AG04449 (cell line): ENCODE measurements at regions of chr9 and their contacts with region 1.

Region 1: DNA sequence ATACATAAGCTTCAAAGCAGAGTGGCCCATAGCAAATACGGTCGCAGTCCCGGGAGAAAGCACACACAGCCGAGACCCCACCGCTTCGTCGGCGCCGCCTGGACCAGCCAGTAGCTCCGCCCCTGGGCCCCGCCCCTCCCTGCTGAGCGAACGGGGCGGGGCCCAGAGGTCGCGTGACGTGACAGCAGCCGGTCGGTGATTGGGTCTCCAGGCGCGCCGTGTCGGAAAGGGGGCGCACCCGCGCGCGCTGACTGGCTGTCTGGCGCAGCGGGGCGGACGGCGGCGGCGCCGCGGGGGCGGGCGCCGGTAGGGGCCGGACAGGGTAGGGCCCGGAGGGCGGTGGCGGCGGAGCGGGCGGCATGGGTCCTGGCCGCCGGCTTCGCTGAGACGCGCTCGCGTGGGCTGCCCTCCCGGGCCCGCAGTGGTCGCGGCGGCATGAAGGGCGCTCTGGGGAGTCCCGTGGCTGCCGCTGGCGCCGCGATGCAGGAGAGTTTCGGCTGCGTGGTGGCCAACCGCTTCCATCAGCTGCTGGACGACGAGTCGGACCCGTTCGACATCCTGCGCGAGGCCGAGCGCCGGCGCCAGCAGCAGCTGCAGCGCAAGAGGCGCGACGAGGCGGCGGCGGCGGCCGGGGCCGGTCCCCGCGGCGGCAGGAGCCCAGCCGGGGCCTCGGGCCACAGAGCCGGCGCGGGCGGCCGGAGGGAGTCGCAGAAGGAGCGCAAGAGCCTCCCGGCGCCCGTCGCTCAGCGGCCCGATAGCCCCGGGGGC is at the start of gene HABP4:
- DNase-seq: no peak
- H3K4me3 ChIP-seq: peak within 1 kb of the TSS; percentile 75
- CTCF ChIP-seq: no peak

Region 2: GRCh38 chr9:96006961-96007360 is 443.1 kb before region 1 on chr9:
- CTCF ChIA-PET with region 1: no interaction called
- POLR2A ChIA-PET with region 1: no interaction called
- DNase-seq: peak; percentile 7
- H3K4me3 ChIP-seq: no peak overlapping the region
- CTCF ChIP-seq: no peak

Region 3: DNA sequence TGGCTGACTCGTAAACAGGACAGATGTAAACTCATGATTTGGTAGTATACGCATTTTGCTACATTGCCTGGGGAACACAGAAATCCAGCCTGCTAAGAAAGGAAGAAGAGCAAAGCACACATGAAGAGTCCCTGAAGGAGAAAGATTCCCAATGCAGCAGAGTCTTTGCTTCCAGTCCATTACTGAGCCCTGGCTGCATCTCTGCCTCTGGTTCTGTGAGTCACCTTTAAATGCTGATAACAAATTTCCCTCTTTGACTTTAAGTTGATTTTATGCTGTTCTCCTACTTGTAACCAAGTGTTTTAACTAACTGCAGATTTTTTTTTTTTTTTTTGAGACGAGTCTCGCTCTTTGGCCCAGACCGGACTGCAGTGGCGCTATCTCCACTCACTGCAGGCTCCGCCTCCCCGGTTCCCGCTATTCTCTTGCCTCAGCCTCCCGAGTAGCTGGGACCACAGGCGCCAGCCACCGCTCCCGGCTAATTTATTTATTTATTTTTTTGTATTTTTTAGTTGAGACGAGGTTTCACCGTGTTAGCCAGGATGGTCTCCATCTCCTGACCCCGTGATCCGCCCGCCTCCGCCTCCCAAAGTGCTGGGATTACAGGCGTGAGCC is 213.6 kb after region 1 on chr9:
- CTCF ChIA-PET with region 1: interaction called, 10 read pairs
- POLR2A ChIA-PET with region 1: no interaction called
- DNase-seq: no peak
- H3K4me3 ChIP-seq: no peak overlapping the region
- CTCF ChIP-seq: no peak